WTC11 (cell line): ENCODE measurements at regions of chr5 and their contacts with region 1.

Region 1: GRCh38 chr5:175603987-175604739 is 53.7 kb upstream of the HRH2 start:
- DNase-seq: no peak
- ATAC-seq: peak; percentile 91
- H3K4me3 Mint-ChIP-seq: peak overlapping the region; percentile 32
- H3K27ac Mint-ChIP-seq: peak overlapping the region; percentile 90
- H3K4me1 Mint-ChIP-seq: peaks cover 33% of the 10 kb centered on the region
- H3K27me3 Mint-ChIP-seq: peaks cover 3% of the 10 kb centered on the region; the same call in 1 of the 2 replicates
- CTCF ChIP-seq: no peak

Region 2: DNA sequence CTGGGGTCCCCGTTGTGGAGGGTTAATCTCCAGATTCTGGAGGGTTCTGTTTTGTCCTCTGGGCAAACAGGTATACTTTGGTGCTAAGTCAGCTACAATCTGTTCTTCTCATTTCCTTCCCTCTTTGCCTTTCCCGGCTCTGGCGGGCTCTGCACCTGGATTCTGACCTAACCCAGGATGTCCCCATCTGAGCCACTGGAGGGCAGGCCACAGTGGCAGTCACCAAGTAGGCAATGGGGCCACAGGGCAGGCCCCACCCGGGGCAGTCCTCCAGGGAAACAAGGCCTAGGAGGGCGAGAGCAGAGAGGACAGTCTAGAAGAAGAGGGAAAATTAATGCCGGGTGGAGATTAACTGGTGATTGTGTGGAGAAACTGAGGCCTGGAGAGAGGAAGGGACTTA is 13.3 kb after region 1 on chr5:
- CTCF ChIA-PET with region 1: interaction called, 12 read pairs
- POLR2A ChIA-PET with region 1: interaction called, 9 read pairs
- DNase-seq: peak; percentile 62
- ATAC-seq: peak; percentile 93
- H3K4me3 Mint-ChIP-seq: no peak overlapping the region
- H3K27ac Mint-ChIP-seq: no peak overlapping the region; the same call in 1 of the 2 replicates
- H3K4me1 Mint-ChIP-seq: peaks cover 11% of the 10 kb centered on the region
- H3K27me3 Mint-ChIP-seq: peaks cover 7% of the 10 kb centered on the region
- CTCF ChIP-seq: no peak

Region 3: DNA sequence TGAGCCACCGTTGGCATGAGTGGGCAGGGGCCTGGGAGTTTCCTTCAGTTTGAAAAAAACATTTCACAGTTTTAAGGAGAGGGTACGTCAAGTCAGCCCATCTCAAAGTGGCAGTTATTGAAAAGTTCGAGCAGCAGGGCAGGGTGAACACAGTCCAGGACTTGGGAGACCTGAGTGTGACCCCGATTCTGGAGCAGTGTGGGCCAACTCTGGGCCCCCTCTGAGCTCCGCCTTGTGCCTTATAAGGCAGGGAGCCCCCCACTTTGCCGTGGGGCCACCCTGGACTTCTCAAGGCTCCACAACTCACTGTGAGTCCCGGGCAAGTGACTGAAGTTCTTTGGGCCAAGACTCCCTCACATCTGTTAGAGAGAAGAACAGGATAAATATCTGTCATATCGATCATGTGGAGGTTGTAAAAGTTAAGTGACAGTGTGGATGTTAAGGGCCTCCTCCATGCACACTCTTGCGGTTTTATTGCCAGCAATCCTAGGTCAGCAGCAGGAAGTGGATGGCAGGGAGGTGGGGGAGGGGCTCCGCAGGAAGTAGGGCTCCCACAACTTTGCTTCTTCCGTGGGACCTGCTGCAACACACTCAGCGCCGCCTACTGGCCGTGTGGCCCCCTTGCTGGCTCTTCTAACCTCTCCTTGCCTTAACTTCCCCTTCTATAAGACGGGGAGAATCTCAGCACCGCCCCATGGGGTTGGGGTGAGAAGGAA is 92.1 kb after region 1 on chr5:
- CTCF ChIA-PET with region 1: no interaction called
- POLR2A ChIA-PET with region 1: no interaction called
- DNase-seq: peak; percentile 84
- ATAC-seq: peak; percentile 79
- H3K4me3 Mint-ChIP-seq: no peak overlapping the region
- H3K27ac Mint-ChIP-seq: peak overlapping the region; percentile 51
- H3K4me1 Mint-ChIP-seq: peaks cover 28% of the 10 kb centered on the region
- H3K27me3 Mint-ChIP-seq: no peaks in the 10 kb centered on the region
- CTCF ChIP-seq: peak; percentile 68; the same call in 1 of the 2 replicates